ENCODE measurements at regions of chr10 and their contacts with region 1.

Region 1: DNA sequence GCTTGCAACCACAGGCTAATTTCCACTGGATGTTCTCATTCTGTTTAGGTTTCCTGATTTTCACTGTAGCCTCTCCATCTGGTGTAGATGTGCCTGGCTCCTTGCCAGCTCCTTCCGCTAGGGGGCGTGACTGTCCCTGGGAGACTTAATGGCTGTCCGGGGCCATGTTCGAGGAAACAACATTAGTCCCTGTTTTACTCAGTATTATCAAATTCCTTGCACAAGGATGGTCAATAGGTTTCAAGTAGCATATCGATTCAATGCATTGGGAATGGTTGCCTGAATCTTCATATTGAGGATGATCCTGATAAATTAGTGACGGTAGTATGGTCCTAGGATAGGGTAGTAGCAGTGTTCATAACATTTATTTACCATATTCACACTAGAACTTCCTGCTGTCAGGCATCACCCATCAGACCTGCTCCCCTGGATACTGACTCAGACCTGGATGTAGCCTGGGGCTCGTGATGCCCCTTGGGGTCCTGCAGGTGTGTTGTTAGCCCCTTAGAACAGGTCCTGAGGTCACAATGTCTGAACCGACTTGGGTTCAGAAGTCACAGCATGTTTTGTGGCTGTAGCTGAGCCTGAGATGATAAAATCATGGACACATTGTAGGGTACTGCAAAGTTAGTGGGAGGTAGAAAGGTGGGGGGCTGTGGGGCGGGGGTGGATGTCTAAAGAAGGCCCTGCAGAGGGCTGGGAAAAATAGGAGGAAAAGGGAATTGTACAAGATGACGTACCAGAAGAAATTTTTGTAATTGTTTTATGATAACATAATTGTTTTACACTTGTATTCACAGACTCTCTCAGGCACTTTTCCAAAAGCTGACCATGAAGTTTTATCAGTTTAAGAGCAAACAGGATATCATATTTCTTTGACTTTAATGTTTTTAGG is 8.9 kb upstream of the EXOC6 start:
- DNase-seq: no peak
- ATAC-seq: no peak
- H3K4me3 ChIP-seq: no peak overlapping the region
- H3K27ac ChIP-seq: no peak overlapping the region
- H3K4me1 ChIP-seq: peaks cover 7% of the 10 kb centered on the region; the same call in 1 of the 2 replicates
- H3K27me3 ChIP-seq: no peaks in the 10 kb centered on the region
- CTCF ChIP-seq: peak; percentile 64

Region 2: DNA sequence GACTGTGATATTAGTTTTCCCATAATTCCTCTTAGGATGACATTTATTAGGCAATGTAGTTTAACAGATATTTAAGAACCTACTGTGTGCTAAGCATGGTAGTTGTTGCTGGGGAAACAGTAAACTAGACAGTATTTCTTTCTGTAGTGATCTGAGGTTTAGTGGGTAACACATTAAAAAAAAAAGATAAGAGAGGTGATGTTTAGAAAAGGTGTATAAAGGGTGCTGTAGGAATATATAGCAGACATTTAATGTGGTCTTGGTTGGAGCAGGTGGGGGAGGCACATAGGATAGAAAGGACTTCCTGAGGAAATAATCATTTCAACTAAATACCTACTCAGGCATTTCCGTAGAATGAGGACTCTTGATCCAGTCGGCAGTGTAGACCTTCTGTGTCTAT is 234.6 kb before region 1 on chr10:
- CTCF ChIA-PET with region 1: interaction called, 10 read pairs
- POLR2A ChIA-PET with region 1: no interaction called
- in situ Hi-C with region 1: no loop called
- intact Hi-C with region 1: no loop called
- DNase-seq: no peak
- ATAC-seq: no peak
- H3K4me3 ChIP-seq: no peak overlapping the region
- H3K27ac ChIP-seq: peak overlapping the region; percentile 12; the same call in 1 of the 2 replicates
- H3K4me1 ChIP-seq: peaks cover 12% of the 10 kb centered on the region; the same call in 1 of the 2 replicates
- H3K27me3 ChIP-seq: no peaks in the 10 kb centered on the region
- CTCF ChIP-seq: no peak

Measured in Panc1 (cell line).